Adrenal gland (tissue), 19 donors: ENCODE measurements at regions of chr14 and their contacts with region 1.

Region 1: GRCh38 chr14:23120541-23121251 is 1.6 kb upstream of the CEBPE start:
- DNase-seq: peak; percentile 88 to 97 (median 93)
- H3K4me3 ChIP-seq: no peak overlapping the region
- H3K27ac ChIP-seq: peak overlapping the region in 2 of 5 donors; percentile 55 to 70
- H3K4me1 ChIP-seq: peaks cover 0 to 16% of the 10 kb centered on the region in 2 donors
- H3K27me3 ChIP-seq: no peaks in the 10 kb centered on the region
- CTCF ChIP-seq: peak; percentile 100
- POLR2A ChIP-seq: peak in 1 of 2 donors; percentile 43

Region 2: GRCh38 chr14:23171222-23172012 is 50.7 kb after region 1 on chr14:
- intact Hi-C with region 1: no loop called
- DNase-seq: peak in 1 of 7 donors; percentile 27
- H3K4me3 ChIP-seq: no peak overlapping the region
- H3K27ac ChIP-seq: no peak overlapping the region
- H3K4me1 ChIP-seq: peaks cover 0 to 20% of the 10 kb centered on the region in 2 donors
- H3K27me3 ChIP-seq: no peaks in the 10 kb centered on the region
- CTCF ChIP-seq: no peak
- POLR2A ChIP-seq: no peak

Region 3: DNA sequence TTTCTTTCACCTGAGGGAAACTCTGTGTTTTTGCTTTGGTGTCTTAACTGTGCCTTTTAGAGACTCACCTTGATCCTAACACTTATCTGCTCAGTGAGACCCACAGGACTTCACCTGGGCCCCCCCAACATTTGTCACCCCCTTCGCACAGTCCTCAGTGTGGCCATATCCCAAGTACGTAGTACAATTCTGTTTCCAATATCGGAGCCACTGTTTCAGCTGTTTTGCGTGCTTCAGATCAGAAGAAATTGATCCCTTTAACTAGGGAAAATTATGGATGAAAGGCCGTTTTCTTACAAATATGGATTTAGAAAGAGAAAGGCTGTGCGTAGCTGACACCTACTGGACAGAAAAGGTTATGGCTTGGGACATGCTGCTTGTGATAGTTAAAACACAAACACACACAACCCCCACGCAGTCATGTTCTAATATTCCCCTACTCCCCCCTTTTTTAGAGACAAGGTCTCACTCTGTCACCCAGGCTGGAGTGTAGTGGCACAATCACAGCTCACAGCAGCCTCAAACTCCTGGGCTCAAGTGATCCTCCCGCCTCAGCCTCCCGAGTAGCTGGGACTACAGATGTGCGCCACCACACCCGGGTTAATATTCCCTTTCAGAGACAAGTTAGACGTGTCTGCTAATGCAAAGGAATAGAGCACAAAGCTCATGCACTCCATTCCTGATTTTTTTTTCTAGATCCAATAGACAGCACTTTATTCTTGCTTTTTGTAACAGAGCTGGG is 66.4 kb after region 1 on chr14:
- intact Hi-C with region 1: loop called (anchors 2 kb)
- DNase-seq: peak; percentile 39 to 86 (median 53)
- H3K4me3 ChIP-seq: no peak overlapping the region
- H3K27ac ChIP-seq: no peak overlapping the region
- H3K4me1 ChIP-seq: no peaks in the 10 kb centered on the region
- H3K27me3 ChIP-seq: no peaks in the 10 kb centered on the region
- CTCF ChIP-seq: peak; percentile 68 to 99 (median 92)
- POLR2A ChIP-seq: no peak

Region 4: GRCh38 chr14:23294734-23295561 is 174.3 kb after region 1 on chr14:
- intact Hi-C with region 1: loop called in 1 of 2 experiments (anchors 10 kb)
- DNase-seq: peak in 6 of 7 donors; percentile 39 to 74 (median 56)
- H3K4me3 ChIP-seq: no peak overlapping the region
- H3K27ac ChIP-seq: no peak overlapping the region
- H3K4me1 ChIP-seq: peaks cover 1 to 16% of the 10 kb centered on the region in 2 donors
- H3K27me3 ChIP-seq: peaks cover 4% of the 10 kb centered on the region
- CTCF ChIP-seq: peak; percentile 66 to 98 (median 86)
- POLR2A ChIP-seq: peak in 1 of 2 donors; percentile 8